ENCODE measurements at regions of chr2 and their contacts with region 1.

Region 1: DNA sequence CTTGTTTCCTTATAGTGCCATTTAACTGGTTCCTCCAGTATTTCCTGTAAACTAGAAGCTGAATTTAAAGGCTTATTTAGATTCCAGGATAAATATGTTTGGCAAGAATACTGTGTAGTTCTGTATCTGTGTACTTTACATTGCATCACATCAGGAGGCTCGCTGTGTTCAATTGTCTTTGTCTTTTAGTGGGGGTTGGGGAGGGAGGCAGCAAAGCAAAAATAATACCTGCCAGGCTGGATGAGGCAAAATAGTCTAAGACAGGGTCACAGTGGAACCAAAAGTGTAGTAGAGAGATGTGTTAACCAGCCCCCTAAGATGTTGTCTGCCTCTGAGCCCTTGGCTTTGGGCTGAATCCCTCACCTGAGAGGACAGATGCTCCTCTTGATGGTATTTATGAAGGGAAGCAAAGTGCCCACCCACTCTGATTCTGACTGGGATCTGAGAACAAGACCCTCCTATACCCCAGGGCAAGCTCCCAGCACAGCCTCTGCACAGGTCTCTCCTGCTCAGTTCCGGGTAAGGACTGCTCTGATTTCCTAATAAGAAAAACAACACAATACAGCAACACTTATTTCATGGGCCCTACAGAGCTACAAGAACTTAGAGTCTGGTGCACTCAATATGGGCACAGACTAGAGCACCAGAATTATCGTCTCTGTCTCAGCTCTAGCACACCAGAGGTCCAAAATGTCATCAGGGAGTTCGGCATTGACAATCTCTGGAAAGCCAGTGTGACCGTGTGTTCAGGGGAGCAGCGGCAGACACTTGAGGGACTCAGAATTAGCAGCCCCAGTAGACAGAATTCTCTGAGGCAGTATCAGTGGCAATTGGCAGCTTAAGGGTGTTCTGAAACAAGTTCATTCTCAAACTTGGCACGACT is 7.3 kb upstream of the AFTPH start:
- DNase-seq: no peak
- ATAC-seq: no peak
- H3K4me3 ChIP-seq: no peak overlapping the region
- H3K27ac ChIP-seq: no peak overlapping the region
- H3K4me1 ChIP-seq: no peaks in the 10 kb centered on the region
- H3K27me3 ChIP-seq: no peaks in the 10 kb centered on the region
- CTCF ChIP-seq: no peak

Region 2: DNA sequence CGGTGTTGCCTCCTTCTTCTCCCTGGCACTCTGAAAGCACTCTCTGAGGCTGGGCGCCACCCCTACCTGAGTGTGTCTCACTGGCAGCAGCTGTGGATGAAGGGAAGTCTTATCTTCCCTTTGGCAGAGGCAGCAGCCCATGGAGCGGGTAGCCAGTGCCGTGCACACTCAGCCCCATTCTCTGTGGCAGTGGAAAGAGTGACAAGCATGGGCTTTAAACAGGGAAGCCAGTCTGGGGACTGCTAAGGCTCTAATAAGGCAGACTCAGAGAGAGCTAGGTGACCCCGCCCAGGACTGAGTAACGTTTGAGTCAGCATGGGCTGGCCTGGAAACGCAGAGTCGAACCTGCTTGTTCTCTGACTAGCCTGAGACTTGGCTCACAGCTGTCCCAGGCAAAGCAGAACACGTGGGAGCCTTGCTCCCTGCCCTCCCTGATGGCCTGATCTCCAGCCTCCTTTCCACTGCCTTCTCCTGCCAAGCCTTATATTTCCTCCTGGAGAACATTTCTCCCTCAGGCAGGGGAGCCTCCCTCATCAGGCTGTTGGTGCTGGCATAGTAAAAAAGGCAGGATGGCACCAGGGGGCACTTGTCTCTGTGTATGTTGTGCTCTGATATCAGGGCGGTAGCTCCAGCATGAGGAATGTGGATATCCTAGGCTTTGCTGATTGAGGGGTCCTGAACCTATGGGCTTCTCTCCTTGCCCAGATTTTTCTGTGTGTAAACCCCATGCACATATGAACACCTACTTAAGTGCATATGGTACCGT is 156.8 kb before region 1 on chr2:
- intact Hi-C with region 1: no loop called
- DNase-seq: peak; percentile 77 to 92 (median 90)
- ATAC-seq: peak; percentile 83 to 91 (median 86)
- H3K4me3 ChIP-seq: no peak overlapping the region
- H3K27ac ChIP-seq: peak overlapping the region; percentile 67 to 91 (median 84)
- H3K4me1 ChIP-seq: peaks cover 23 to 35% (median 24%) of the 10 kb centered on the region in 3 donors
- H3K27me3 ChIP-seq: no peaks in the 10 kb centered on the region
- CTCF ChIP-seq: no peak

Region 3: DNA sequence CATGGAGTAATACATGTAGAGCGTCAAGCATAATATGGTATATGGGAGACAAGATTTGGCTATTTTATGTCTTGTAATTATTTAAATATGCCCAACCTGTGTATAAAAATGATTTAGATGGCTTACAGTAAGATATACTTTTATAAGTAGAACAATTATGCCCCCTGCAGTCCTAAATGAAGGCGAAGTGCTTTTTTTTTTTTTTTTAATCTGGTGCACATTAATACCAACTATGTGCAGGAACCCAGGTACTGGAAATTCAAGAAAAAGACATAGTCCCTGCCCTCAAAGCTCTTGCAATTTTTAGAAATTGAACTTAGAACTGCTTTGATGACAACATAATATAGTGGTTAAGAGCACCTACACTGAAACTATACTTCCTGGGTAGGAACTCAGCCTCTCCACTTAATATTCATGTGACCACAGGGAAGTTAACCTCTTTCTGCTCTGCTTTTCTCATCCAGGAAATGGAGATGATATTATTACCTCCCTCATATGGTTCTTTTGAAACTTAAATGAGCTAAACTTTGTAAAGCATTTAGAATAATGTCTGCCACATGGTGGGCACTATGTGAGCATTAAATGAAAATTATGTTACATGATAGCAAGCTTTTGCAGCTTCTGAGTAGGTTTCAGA is 45.4 kb after region 1 on chr2:
- intact Hi-C with region 1: loop called in 2 of 3 experiments (anchors 5 kb)
- DNase-seq: no peak
- ATAC-seq: peak in 3 of 4 donors; percentile 83 to 88 (median 87)
- H3K4me3 ChIP-seq: no peak overlapping the region
- H3K27ac ChIP-seq: no peak overlapping the region
- H3K4me1 ChIP-seq: peaks cover 0 to 8% (median 0%) of the 10 kb centered on the region in 3 donors
- H3K27me3 ChIP-seq: no peaks in the 10 kb centered on the region
- CTCF ChIP-seq: peak in 1 of 4 donors; percentile 22